ENCODE measurements at regions of chr16 and their contacts with region 1.

Region 1: DNA sequence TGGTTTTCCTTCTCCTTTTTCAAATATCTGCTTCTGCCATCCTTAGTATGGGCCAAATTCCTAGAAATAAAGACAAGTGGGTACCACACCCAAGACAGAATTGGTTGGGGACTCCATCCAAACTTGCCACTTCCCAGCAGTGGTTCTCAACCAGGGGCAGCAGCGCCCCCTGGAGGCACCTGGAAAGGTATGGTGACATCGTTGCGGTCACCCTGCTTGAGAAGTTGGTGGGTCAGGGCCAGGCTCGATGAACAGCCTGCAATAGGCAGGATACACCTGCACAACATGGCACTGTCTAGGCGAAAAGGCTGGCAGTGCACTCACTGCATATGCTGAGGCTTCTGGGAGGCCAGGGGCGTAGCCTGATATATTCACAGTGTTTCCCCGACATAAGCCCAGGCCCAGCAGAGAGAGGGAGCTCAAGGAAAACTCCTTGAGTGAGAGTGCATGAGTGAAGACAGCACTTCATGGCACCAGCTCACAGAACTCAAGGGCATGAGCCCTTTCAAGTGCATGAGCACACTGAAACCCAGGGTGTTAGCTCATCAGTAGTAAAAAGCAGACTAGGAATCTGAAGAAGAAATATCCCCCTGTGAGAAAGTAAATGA is 57.7 kb downstream of the CMC2 start:
- DNase-seq: peak in 1 of 2 experiments; percentile 88
- H3K4me3 ChIP-seq: no peak overlapping the region
- H3K27ac ChIP-seq: no peak overlapping the region
- H3K4me1 ChIP-seq: no peaks in the 10 kb centered on the region
- H3K27me3 ChIP-seq: no peaks in the 10 kb centered on the region
- CTCF ChIP-seq: peak; percentile 87 to 98 (median 90)
- EP300 ChIP-seq: no peak
- POLR2A ChIP-seq: no peak
- RAD21 ChIP-seq: peak; percentile 87 to 92

Region 2: GRCh38 chr16:80656711-80657150 is 292.3 kb before region 1 on chr16:
- CTCF ChIA-PET with region 1: no interaction called
- POLR2A ChIA-PET with region 1: no interaction called
- DNase-seq: no peak
- H3K4me3 ChIP-seq: no peak overlapping the region
- H3K27ac ChIP-seq: no peak overlapping the region
- H3K4me1 ChIP-seq: no peaks in the 10 kb centered on the region
- H3K27me3 ChIP-seq: no peaks in the 10 kb centered on the region
- CTCF ChIP-seq: no peak
- EP300 ChIP-seq: no peak
- POLR2A ChIP-seq: no peak
- RAD21 ChIP-seq: no peak

Region 3: DNA sequence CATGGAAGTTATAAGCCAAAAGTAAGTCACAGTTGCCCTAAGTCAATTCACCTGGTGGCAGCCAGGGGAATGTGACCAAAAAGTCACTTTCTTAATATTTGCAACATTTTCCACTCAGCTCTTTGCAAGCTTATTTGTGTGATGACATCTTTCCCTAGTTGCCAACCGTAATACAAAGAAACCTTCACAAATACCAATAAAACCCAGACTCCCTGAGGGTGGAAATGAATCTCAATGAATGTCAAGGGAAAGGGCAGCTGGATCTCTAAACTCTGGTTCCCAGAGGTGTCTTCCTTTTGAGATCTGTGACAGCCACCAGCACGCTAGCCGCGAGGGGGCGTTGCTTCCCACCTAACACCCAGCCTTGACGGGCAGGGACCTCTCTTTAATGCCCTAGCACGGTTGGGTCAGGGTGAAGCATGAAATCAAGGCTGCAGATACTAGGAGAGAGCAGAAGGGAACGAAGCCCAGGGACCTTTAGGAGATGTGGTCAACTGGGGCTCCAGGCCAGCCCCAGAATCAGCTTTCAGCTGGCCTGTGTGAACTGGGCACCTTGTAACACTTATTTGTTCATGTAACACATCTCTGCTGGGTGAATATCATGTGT is 24.5 kb before region 1 on chr16:
- CTCF ChIA-PET with region 1: interaction called, 84 read pairs
- POLR2A ChIA-PET with region 1: no interaction called
- DNase-seq: peak; percentile 66 to 88
- H3K4me3 ChIP-seq: no peak overlapping the region
- H3K27ac ChIP-seq: no peak overlapping the region
- H3K4me1 ChIP-seq: peaks cover 0 to 2% (median 0%) of the 10 kb centered on the region in 4 experiments; a peak in 2 of 7 replicates
- H3K27me3 ChIP-seq: no peaks in the 10 kb centered on the region
- CTCF ChIP-seq: peak; percentile 91 to 96 (median 93)
- EP300 ChIP-seq: no peak
- POLR2A ChIP-seq: no peak
- RAD21 ChIP-seq: peak; percentile 79 to 84

Region 4: GRCh38 chr16:80931801-80932712 is 16.9 kb before region 1 on chr16:
- CTCF ChIA-PET with region 1: interaction called, 84 read pairs
- POLR2A ChIA-PET with region 1: interaction called, 3 read pairs
- DNase-seq: peak; percentile 33 to 77
- H3K4me3 ChIP-seq: peak overlapping the region; percentile 27 to 61 (median 34)
- H3K27ac ChIP-seq: no peak overlapping the region
- H3K4me1 ChIP-seq: peaks cover 0 to 4% (median 0%) of the 10 kb centered on the region in 4 experiments; a peak in 2 of 7 replicates
- H3K27me3 ChIP-seq: peaks cover 0 to 26% (median 21%) of the 10 kb centered on the region in 4 experiments; a peak in 6 of 7 replicates
- CTCF ChIP-seq: peak in 2 of 3 experiments; percentile 0 to 15; a peak in 2 of 4 replicates
- EP300 ChIP-seq: no peak
- POLR2A ChIP-seq: no peak
- RAD21 ChIP-seq: no peak; a peak in 1 of 4 replicates

Region 5: GRCh38 chr16:80938035-80938865 is 10.7 kb before region 1 on chr16:
- CTCF ChIA-PET with region 1: interaction called, 32 read pairs
- POLR2A ChIA-PET with region 1: interaction called, 3 read pairs
- DNase-seq: no peak
- H3K4me3 ChIP-seq: no peak overlapping the region
- H3K27ac ChIP-seq: 0 out of 2 replicates have a peak overlapping the region, but pooled peaks have one; percentile 12
- H3K4me1 ChIP-seq: peaks cover 0 to 9% (median 4%) of the 10 kb centered on the region in 4 experiments; a peak in 4 of 7 replicates
- H3K27me3 ChIP-seq: peaks cover 0 to 13% (median 9%) of the 10 kb centered on the region in 4 experiments; a peak in 5 of 7 replicates
- CTCF ChIP-seq: no peak
- EP300 ChIP-seq: no peak
- POLR2A ChIP-seq: no peak
- RAD21 ChIP-seq: no peak

Region 6: DNA sequence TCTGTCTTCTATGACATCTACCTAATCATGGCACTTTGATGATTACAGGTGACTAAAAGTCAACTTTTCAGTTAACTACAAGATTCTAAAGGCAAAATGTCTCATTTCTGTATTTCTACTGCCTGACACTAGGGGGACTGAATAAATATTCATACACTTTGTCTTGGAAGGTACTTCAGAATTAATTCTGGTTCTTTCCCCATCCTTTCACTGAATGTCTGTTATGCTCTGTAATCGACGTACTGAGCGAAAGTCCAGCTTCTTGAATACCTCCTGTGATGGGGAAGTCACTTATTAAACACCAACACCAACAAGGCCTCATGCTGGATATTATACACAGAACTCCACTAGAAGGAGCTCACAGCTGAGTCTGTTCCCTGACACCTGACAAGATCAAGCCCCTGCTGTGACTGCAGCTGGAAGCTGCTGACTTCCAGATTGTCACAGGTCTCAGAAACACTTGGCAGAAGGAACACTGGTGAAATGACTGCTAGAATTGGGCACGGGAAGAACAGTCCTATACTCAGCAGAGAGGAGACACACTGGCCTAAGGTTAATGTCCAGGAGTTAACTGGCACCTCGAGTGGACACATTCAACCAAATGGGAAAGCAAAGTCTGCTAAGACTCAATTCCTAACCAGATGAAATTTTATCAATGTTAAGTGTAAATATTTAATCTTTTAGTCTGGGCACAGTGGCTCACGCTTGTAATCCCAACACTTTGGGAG is 25.8 kb after region 1 on chr16:
- CTCF ChIA-PET with region 1: interaction called, 27 read pairs
- POLR2A ChIA-PET with region 1: no interaction called
- DNase-seq: no peak
- H3K4me3 ChIP-seq: no peak overlapping the region
- H3K27ac ChIP-seq: no peak overlapping the region
- H3K4me1 ChIP-seq: no peaks in the 10 kb centered on the region
- H3K27me3 ChIP-seq: no peaks in the 10 kb centered on the region
- CTCF ChIP-seq: peak in 1 of 3 experiments; percentile 35; a peak in 2 of 4 replicates
- EP300 ChIP-seq: no peak
- POLR2A ChIP-seq: no peak
- RAD21 ChIP-seq: no peak

Region 7: GRCh38 chr16:81223391-81223829 is 274.4 kb after region 1 on chr16:
- CTCF ChIA-PET with region 1: no interaction called
- POLR2A ChIA-PET with region 1: no interaction called
- DNase-seq: no peak
- H3K4me3 ChIP-seq: no peak overlapping the region
- H3K27ac ChIP-seq: no peak overlapping the region
- H3K4me1 ChIP-seq: peaks cover 0 to 3% (median 0%) of the 10 kb centered on the region in 4 experiments; a peak in 1 of 7 replicates
- H3K27me3 ChIP-seq: no peaks in the 10 kb centered on the region
- CTCF ChIP-seq: no peak
- EP300 ChIP-seq: no peak
- POLR2A ChIP-seq: no peak
- RAD21 ChIP-seq: no peak